ENCODE measurements at regions of chr3 and their contacts with region 1.

Region 1: GRCh38 chr3:10248184-10249080 is at the start of gene TATDN2:
- DNase-seq: peak; percentile 98

Region 2: DNA sequence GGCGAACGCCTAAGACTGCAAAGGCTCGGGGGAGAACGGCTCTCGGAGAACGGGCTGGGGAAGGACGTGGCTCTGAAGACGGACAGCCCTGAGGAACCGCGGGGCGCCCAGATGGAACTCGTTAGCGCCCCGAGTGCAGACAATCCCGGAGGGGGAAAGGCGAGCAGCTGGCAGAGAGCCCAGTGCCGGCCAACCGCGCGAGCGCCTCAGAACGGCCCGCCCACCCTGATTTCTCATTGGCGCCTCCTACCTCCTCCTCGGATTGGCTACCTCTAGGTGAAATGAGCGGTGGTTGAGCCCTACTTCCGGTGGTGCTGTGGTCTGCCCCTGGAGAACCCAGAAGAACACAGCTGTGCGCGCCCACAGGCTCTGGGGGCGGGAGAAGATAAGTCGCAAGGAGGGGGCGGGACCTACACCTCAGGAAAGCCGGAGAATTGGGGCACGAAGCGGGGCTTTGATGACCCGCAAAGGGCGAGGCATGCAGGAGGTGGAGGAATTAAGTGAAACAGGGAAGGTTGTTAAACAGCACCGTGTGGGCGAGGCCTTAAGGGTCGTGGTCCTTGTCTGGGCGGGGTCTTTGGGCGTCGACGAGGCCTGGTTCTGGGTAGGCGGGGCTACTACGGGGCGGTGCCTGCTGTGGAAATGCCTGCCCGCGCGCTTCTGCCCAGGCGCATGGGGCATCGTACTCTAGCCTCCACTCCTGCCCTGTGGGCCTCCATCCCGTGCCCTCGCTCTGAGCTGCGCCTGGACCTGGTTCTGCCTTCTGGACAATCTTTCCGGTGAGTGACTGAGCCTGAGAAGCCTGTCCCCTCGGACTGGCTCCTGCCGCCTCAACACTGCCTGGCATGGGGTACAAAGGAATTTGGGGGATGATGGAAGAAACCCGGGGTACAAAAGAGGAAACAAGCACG is 498.5 kb before region 1 on chr3 and contains the start of gene OGG1:
- CTCF ChIA-PET with region 1: no interaction called
- POLR2A ChIA-PET with region 1: no interaction called
- DNase-seq: peak; percentile 96

Region 3: DNA sequence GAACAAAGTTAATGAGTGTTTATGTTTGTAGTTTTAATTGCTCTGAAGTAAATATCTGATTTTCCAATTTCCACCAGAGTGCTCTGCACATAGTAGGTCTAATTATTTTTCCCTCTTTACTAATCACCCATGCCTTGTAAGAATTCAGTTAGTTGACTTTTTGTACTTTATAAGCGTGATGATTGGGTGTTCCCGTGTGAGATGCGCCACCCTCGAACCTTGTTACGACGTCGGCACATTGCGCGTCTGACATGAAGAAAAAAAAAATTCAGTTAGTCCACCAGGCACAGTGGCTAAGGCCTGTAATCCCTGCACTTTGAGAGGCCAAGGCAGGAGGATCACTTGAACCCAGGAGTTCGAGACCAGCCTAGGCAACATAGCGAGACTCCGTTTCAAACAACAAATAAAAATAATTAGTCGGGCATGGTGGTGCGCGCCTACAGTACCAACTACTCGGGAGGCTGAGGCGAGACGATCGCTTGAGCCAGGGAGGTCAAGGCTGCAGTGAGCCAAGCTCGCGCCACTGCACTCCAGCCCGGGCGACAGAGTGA is 107.4 kb before region 1 on chr3:
- CTCF ChIA-PET with region 1: no interaction called
- POLR2A ChIA-PET with region 1: interaction called, 10 read pairs
- DNase-seq: no peak